Activated CD4-positive, alpha-beta T cell treated with anti-CD3 and anti-CD28 coated beads, Interleukin-2, amount 10 ng/mL, durations not matched to agents 24 days and 14 days (primary cell): ENCODE measurements at regions of chr14 and their contacts with region 1.

Region 1: DNA sequence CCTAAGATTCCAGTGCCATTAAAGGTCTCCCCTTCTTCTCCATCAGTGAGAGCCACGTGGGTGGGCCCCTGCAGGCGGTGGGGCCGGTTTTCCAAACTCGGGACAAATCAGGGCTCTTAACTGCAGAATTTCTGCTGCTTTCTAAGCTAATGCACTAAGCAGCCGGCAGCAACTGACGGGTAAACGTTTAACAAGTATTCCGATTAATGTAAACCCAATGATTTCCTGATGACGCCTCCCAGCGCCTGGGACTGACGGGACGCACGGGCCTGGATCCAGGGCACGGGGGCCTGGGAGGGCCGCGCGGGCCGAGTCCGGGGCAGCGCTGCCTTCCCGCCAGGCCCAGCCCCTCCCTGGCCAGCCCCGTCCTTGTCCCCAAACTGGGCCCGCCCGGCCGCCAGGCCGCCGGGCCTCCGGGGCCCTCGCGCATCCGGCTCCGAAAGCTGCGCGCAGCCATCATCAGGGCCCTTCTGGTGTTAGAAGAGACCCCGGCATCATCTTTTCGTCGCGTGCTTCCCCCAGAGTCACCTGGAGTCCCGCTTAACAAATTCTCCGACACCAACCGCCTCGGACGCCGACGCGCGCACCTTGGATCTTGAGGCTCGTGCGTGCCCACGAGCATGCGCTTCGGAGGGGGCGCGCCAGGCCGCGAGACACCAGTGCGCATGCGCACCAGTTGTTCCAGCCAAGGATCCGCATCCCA is at the start of gene MLH3:
- DNase-seq: peak; percentile 94
- H3K4me3 Mint-ChIP-seq: peak within 1 kb of the TSS; percentile 92
- H3K27ac Mint-ChIP-seq: peak within 1 kb of the TSS; percentile 97
- H3K4me1 Mint-ChIP-seq: peaks cover 60% of the 10 kb centered on the region
- H3K27me3 Mint-ChIP-seq: no peaks in the 10 kb centered on the region
- total RNA-seq, gene MLH3: 27.7 and 28.3 TPM in 2 replicates

Region 2: DNA sequence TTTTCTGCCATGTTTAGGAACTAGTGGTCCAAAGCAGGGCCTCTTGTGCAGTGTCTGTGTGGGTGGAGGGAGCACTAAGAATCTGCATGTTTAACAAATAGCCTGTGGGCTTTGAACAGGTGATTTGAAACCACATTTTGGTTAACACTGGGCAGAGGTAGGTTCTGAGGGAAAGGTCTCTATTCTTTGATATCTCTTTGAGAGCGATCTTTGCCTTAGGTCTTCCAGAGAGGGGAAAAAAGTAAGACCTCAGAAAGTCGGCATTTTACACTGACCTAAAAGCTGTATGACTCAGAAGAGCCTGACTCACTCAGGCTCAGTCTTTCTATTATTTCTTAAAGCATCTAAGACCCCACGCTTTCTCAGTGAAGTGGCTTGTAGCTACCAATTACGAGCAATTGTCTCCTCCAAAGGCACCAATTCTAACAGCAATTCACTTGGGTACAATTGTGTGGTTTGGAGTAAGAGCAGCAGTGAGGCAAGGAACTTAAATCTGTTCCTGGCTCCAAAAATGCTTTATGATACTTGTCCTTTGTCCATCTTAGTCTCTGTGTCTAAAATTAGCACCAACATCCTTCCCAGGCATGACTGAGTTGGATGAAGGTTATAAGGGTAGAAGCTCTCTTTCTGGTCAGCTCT is 39.5 kb before region 1 on chr14:
- intact Hi-C with region 1: loop called (anchors 5 kb)
- DNase-seq: no peak
- H3K4me3 Mint-ChIP-seq: no peak overlapping the region
- H3K27ac Mint-ChIP-seq: peak overlapping the region; percentile 74
- H3K4me1 Mint-ChIP-seq: peaks cover 14% of the 10 kb centered on the region
- H3K27me3 Mint-ChIP-seq: no peaks in the 10 kb centered on the region

Region 3: DNA sequence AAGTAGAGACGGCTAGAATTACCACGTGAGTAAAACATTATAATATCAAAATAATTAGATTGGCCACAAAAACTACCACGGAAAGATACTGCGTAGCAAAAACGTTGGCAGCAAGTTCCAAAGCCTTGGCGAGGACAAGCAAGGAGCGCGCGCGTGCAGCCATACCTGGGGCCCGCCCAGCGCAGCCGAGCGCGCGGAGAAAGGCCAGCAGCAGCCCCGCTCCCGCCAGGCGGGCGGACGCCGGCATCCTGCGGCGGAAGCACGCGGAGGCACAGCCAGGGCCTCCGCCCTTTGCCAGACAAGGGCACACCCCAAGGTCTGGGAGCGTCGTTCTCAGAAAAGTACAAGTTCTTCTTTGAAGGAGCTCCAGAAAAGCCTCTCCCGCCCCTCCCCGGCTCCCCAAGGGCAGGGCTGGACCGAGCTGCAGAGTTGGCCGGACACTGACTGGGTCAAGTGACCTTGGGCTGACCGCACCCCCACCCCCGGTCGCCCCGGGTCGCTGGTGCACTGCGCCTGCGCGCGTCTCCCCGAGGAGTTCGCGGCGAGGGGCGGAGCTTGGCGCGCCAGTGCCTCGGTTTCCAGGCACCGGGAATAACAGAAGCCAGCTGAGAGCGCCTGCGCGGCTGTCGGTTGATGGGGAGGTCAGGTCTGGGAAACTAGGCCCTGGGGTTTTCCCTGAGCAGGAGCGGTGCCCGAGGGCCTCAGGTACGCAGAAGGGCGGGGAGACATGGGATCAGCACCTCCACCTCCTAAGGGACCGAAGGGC is 18.2 kb after region 1 on chr14 and contains the start of gene ZC2HC1C:
- intact Hi-C with region 1: loop called (anchors 2 kb)
- DNase-seq: peak; percentile 91
- H3K4me3 Mint-ChIP-seq: peak within 1 kb of the TSS; percentile 14
- H3K27ac Mint-ChIP-seq: peak within 1 kb of the TSS; percentile 88
- H3K4me1 Mint-ChIP-seq: peaks cover 9% of the 10 kb centered on the region
- H3K27me3 Mint-ChIP-seq: no peaks in the 10 kb centered on the region
- total RNA-seq, gene ZC2HC1C: 0.82 and 1.6 TPM in 2 replicates